ENCODE measurements at regions of chr2 and their contacts with region 1.

Region 1: DNA sequence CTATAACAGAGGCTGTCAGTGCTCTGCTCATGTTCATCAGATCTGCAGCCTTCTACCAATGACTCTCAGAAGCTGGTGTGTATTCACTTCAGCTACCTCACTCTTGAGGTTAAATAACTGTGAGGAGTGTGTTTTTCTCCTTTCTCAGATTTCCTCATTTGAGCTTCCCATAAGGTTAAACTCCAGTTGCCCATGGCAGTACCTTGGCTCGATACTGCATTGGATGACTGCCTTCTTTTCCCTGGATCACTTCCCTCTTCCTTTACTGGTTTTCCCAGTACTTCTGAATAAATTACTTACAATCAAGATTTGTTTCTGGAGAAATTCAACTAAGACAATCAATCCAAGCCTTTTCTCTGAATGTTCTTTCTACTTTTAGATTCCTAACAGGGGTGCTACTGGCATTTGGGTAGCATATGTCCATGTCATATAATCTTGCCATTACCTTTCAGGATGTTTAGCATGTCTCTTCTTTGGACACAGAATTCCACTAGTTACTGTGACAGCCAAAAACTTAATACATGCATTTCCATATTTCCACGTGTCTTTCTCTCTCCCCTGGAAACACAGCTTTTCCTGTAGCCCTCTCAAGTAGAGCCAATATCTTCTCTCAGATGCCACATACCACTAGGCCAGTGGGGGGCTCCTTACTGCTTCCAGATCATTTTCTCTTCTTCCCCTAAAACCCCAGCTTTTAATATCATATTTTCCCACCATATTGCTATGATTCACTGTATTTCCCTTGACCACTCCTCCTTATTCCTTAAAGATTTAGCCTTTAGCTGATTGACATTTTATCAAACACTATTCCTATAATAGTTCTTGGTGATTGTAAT is 15.0 kb upstream of the SPOPL start:
- DNase-seq: no peak

Region 2: DNA sequence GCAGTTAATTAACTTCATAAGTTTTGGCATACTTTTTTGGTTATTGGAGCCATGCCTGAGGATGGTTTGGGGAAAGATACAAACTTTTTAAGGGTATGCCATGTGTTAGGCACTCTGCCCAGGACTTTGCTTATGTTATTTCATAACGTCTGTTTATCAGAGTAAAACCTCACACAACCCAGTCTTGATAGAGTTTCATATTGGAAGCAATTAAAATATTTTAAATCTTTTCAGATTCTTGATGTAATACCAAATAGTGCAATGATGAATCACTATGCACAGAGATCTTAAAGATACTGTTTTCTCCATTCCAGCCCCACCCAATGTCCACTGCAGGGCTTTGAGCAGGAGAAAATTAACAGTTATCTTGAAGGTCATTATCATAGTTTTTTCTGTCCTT is 1051.4 kb before region 1 on chr2:
- intact Hi-C with region 1: loop called in 1 of 2 experiments (anchors 10 kb)
- DNase-seq: no peak

Region 3: GRCh38 chr2:137947728-137948336 is 538.7 kb before region 1 on chr2:
- intact Hi-C with region 1: no loop called
- DNase-seq: peak; percentile 90

Region 4: DNA sequence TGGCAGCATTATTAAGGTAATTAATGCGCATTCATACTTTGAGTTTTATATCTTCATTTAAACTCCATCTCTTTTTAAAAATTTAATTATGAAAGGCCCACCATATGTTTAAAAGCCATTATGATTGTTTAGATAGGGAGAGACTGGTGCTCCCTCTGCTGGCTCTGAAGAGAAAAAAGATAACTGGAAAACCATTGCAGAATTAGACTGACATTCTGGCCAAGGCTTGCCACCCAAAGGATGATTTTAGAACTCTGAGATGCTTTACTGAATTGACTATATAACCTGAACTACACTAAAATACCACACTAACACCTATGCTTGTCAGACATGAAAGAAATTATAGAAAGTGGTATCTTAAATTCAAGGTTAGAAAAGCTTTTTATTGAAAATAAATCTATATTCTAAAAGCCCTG is 112.6 kb before region 1 on chr2:
- intact Hi-C with region 1: no loop called
- DNase-seq: no peak

Region 5: GRCh38 chr2:138507267-138507666 is 20.7 kb after region 1 on chr2:
- intact Hi-C with region 1: no loop called
- DNase-seq: no peak

Measured in posterior vena cava (tissue), 2 donors.